CD4-positive, alpha-beta T cell (primary cell): ENCODE measurements at regions of chr1 and their contacts with region 1.

Region 1: DNA sequence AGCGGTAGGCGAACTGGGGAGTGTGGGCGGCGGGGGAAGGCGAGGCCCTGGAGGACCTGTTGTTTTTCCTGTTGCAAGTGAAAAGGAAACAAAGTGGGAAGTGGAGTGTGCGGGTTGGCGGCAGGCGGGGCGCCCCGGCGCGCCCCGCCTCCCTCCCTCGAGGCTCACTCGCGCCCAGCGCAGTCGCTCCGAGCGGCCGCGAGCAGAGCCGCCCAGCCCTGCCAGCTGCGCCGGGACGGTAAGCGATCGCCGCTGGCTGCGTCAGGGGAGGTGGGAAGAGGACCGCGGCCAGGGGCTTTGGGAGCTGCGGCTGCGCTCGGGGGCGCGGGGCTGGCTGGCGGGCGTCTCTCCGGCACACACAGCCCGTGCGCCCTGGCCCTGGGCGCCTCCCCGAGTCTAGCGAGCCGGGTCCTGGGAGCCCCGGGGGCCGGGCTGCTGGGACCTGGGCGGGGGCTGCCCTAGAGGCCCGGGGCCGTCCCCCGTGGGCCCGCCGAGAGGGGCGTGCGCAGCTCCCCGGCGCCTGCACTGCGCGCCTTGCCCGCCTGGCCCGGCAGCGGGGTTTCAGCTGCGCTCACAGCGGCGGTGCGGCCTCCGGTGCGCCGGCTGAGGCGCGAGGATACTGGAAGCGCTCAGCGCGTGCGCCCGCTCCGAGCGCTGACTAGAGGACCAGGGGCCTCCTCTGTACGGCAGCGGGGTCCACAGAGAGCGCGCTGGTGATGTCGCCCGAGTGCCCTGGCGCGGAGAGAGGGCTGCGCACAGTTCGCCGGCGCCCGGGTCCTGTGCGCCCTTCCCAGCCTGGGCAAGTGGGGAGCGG is at the start of gene PIK3CD:
- DNase-seq: peak in 13 of 14 experiments; percentile 11 to 74 (median 46)
- ATAC-seq: peak; percentile 43
- H3K4me3 ChIP-seq: peak within 1 kb of the TSS; percentile 93
- H3K4me3 Mint-ChIP-seq: peak within 1 kb of the TSS; percentile 100
- H3K27ac ChIP-seq: peak within 1 kb of the TSS; percentile 61 to 88
- H3K27ac Mint-ChIP-seq: peak within 1 kb of the TSS; percentile 97
- H3K4me1 ChIP-seq: peaks cover 76% of the 10 kb centered on the region
- H3K4me1 Mint-ChIP-seq: peaks cover 73% of the 10 kb centered on the region
- H3K27me3 ChIP-seq: no peaks in the 10 kb centered on the region
- H3K27me3 Mint-ChIP-seq: no peaks in the 10 kb centered on the region
- CTCF ChIP-seq: no peak
- total RNA-seq, gene PIK3CD: 202 to 213 TPM

Region 2: DNA sequence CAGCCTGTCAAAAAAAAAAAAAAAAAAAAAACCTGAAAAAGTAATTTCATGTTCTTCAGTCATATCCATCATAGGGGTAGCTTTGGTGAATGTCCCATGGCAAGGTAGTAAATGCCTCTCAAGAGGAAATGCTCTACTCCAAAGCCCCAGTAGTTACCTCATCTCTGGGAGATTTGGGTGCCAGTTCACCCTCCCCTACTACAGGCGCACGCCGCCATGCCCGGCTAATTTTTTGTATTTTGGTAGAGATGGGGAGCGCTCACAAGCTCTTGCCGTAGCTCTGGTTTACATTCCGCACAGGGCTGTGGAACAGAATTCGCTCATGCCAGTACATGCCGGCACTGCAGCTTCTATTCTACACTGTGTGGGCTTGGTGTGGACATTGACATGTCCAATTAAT is 13.4 kb after region 1 on chr1:
- CTCF ChIA-PET with region 1: no interaction called
- POLR2A ChIA-PET with region 1: interaction called, 61 read pairs
- intact Hi-C with region 1: no loop called
- DNase-seq: no peak
- ATAC-seq: no peak
- H3K4me3 ChIP-seq: no peak overlapping the region
- H3K4me3 Mint-ChIP-seq: no peak overlapping the region
- H3K27ac ChIP-seq: peak overlapping the region in 1 of 2 donors; percentile 39
- H3K27ac Mint-ChIP-seq: peak overlapping the region; percentile 83
- H3K4me1 ChIP-seq: peaks cover 53% of the 10 kb centered on the region
- H3K4me1 Mint-ChIP-seq: peaks cover 52% of the 10 kb centered on the region
- H3K27me3 ChIP-seq: no peaks in the 10 kb centered on the region
- H3K27me3 Mint-ChIP-seq: no peaks in the 10 kb centered on the region
- CTCF ChIP-seq: no peak

Region 3: GRCh38 chr1:9676815-9677393 is 25.1 kb after region 1 on chr1:
- CTCF ChIA-PET with region 1: interaction called, 4 read pairs
- POLR2A ChIA-PET with region 1: interaction called, 43 read pairs
- intact Hi-C with region 1: no loop called
- DNase-seq: no peak
- ATAC-seq: no peak
- H3K4me3 ChIP-seq: no peak overlapping the region
- H3K4me3 Mint-ChIP-seq: no peak overlapping the region
- H3K27ac ChIP-seq: peak overlapping the region; percentile 44 to 57
- H3K27ac Mint-ChIP-seq: peak overlapping the region; percentile 83
- H3K4me1 ChIP-seq: peaks cover 79% of the 10 kb centered on the region
- H3K4me1 Mint-ChIP-seq: peaks cover 69% of the 10 kb centered on the region
- H3K27me3 ChIP-seq: no peaks in the 10 kb centered on the region
- H3K27me3 Mint-ChIP-seq: no peaks in the 10 kb centered on the region
- CTCF ChIP-seq: no peak

Region 4: DNA sequence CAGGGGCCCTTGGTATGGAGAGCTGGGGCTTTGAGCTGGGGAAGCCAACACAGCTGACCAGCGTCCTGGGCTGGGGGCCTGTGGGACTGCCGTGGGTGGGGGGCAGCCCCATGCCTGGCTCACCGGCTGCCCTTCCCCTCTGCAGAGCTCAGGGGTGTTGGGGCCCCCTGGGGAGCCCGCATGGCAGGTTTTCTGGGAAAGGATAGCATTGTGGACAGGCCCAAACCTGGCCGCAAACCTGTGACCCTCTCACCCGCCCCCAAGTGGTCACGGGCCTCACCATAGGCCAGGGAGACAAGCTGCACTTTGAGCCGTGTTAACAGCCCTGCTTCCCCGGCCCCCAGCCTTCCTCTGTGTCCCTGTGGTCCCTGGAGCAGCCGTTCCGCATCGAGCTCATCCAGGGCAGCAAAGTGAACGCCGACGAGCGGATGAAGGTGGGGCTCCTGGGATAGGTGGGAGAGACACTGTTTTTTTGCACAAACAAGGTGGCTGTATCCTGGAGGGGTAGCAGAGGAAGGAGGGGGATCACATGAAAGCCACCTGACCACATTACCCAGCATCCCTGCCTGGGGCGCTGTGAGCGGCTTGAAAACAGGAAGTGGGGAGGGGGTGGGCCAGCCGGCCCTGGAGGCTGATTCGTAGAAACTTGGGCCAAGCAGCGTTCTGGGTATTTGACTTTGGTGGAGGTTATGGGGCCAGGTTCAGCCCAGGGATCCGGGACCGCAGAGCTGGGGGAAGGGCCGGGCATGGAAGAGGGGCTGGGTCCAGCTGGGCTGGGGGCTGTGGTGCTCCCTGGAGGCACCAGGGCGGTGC is 65.6 kb after region 1 on chr1:
- CTCF ChIA-PET with region 1: interaction called, 3 read pairs
- POLR2A ChIA-PET with region 1: interaction called, 228 read pairs
- intact Hi-C with region 1: loop called (anchors 2 to 5 kb)
- DNase-seq: peak; percentile 81 to 97 (median 90)
- ATAC-seq: peak; percentile 84
- H3K4me3 ChIP-seq: peak overlapping the region; percentile 91
- H3K4me3 Mint-ChIP-seq: peak overlapping the region; percentile 88
- H3K27ac ChIP-seq: peak overlapping the region; percentile 63 to 89
- H3K27ac Mint-ChIP-seq: peak overlapping the region; percentile 96
- H3K4me1 ChIP-seq: peaks cover 99% of the 10 kb centered on the region
- H3K4me1 Mint-ChIP-seq: peaks cover 52% of the 10 kb centered on the region
- H3K27me3 ChIP-seq: no peaks in the 10 kb centered on the region
- H3K27me3 Mint-ChIP-seq: no peaks in the 10 kb centered on the region
- CTCF ChIP-seq: no peak

Region 5: DNA sequence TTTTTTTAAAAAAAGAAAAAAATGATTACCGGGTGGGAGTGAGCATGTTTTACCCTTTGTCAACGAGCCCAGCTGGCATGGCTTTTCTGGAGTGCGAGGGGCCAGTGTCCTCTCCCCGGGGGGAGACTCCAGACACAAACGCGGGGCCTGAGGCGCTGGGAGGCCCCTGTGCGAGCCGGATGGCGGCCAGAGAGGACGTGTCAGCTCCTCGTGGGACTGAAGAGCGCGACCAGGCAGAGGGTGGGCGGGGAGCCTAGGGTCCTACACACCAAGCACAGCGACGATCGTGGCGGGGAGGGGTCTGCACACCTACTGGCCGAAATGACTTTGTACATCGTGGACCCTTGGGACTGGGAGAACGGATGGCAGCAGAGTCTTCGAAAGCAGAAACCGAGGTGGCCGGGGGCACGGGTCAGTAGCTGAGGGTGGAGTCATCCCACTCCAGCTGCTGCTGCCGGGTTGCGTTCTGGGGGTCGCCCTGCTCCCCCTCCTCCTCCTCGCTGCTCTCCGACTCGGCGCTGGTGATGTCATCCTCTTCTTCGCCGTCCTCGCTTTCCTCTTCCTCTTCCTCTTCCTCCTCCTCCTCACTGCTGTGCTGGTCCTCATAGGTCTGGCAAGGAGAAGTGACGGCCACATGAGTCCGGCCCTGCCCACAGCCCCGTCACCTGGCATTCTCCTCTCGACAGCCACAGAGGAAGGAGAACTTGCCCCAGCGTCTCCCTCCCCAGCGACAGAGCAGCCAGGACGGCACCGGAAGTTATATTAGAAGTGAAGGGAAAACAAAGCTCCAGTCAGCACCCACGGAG is 78.5 kb after region 1 on chr1:
- CTCF ChIA-PET with region 1: interaction called, 7 read pairs
- POLR2A ChIA-PET with region 1: interaction called, 14 read pairs
- intact Hi-C with region 1: loop called in 1 of 2 experiments (anchors 2 kb)
- DNase-seq: peak in 3 of 14 experiments; percentile 35 to 63 (median 61)
- ATAC-seq: no peak
- H3K4me3 ChIP-seq: no peak overlapping the region
- H3K4me3 Mint-ChIP-seq: peak overlapping the region; percentile 81
- H3K27ac ChIP-seq: no peak overlapping the region
- H3K27ac Mint-ChIP-seq: peak overlapping the region; percentile 89
- H3K4me1 ChIP-seq: peaks cover 66% of the 10 kb centered on the region
- H3K4me1 Mint-ChIP-seq: peaks cover 68% of the 10 kb centered on the region
- H3K27me3 ChIP-seq: no peaks in the 10 kb centered on the region
- H3K27me3 Mint-ChIP-seq: no peaks in the 10 kb centered on the region
- CTCF ChIP-seq: no peak

Region 6: GRCh38 chr1:9746211-9746610 is 94.4 kb after region 1 on chr1:
- CTCF ChIA-PET with region 1: no interaction called
- POLR2A ChIA-PET with region 1: no interaction called
- intact Hi-C with region 1: no loop called
- DNase-seq: no peak
- ATAC-seq: no peak
- H3K4me3 ChIP-seq: no peak overlapping the region
- H3K4me3 Mint-ChIP-seq: no peak overlapping the region
- H3K27ac ChIP-seq: no peak overlapping the region
- H3K27ac Mint-ChIP-seq: no peak overlapping the region
- H3K4me1 ChIP-seq: no peaks in the 10 kb centered on the region
- H3K4me1 Mint-ChIP-seq: no peaks in the 10 kb centered on the region
- H3K27me3 ChIP-seq: no peaks in the 10 kb centered on the region
- H3K27me3 Mint-ChIP-seq: no peaks in the 10 kb centered on the region
- CTCF ChIP-seq: no peak